Endothelial cell of umbilical vein (primary cell): ENCODE measurements at regions of chr11 and their contacts with region 1.

Region 1: DNA sequence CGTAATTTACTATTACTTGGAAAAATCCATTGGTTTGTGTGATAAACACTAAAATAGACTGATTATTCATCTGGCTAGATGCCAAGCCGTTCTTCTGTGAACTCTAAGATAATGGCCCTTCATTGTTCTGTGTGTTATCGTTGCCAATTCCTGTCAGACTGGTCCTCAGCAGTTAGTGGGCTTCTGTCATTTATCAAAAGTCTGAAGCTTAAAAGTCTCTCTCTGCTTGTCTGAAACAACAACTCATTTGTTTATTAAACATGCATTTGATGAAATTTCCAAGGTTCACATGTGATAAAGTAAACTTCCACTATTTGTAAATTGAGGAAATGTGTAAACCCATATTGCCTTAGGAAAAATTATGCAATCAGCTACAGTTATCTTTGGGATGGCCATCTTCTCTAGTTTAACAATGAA is 21.1 kb upstream of the RDX start:
- DNase-seq: peak; percentile 98
- H3K4me3 ChIP-seq: no peak overlapping the region
- H3K27ac ChIP-seq: peak overlapping the region; percentile 93
- H3K4me1 ChIP-seq: peaks cover 48% of the 10 kb centered on the region
- H3K27me3 ChIP-seq: no peaks in the 10 kb centered on the region
- CTCF ChIP-seq: no peak
- POLR2A ChIP-seq: peak; percentile 55

Region 2: GRCh38 chr11:110296226-110297075 is 21.1 kb before region 1 on chr11 and contains the start of gene RDX:
- CTCF ChIA-PET with region 1: interaction called, 4 read pairs
- POLR2A ChIA-PET with region 1: no interaction called
- dilution Hi-C with region 1: no loop called
- intact Hi-C with region 1: loop called (anchors 1 kb)
- DNase-seq: peak; percentile 78
- H3K4me3 ChIP-seq: peak within 1 kb of the TSS; percentile 94 to 96 (median 95)
- H3K27ac ChIP-seq: peak within 1 kb of the TSS; percentile 96
- H3K4me1 ChIP-seq: peaks cover 31% of the 10 kb centered on the region
- H3K27me3 ChIP-seq: no peaks in the 10 kb centered on the region
- CTCF ChIP-seq: peak in 1 of 2 donors; percentile 1
- POLR2A ChIP-seq: peak; percentile 75
- total RNA-seq, gene RDX: 239 and 280 TPM in 2 replicates